Endothelial cell of umbilical vein (primary cell): ENCODE measurements at regions of chr6 and their contacts with region 1.

Region 1: DNA sequence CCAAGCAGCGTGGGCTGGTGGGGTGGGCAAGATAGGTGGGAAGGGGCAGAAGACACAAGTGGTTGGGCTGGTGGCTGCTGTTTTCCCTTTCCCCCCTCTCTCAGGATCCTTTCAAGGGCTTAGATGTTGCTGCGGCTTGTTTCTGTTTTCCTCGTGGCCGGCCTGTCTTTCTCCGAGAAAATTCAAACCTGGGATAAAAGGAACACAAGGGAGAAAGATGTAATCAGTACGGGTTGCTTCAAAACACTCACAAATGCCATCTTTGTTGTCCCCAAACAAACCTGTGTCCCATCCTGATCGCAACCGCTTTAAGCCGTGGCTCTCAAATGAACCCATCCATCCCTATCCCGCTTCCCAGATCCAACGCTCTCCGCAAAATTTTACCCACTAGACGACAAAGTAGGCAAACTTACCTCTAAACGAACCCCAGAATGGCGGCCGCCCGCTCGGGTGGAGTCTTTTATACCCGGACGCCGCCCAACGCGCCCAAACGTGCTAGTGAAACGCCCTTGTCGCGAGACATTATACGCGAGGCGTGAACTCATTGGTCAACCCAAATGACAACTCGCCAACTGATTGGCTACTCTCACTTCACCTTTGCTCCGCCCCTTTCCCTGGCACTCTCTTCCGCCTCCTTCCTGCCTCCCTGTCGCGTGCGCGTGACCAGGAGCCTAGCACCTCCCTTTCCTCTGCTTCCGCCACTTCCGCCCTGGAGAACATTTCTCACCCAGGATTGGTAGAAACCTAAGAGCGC is at the start of gene PPP1R10:
- DNase-seq: peak; percentile 100
- H3K4me3 ChIP-seq: peak within 1 kb of the TSS; percentile 51 to 84 (median 73)
- H3K27ac ChIP-seq: peak within 1 kb of the TSS; percentile 96
- H3K4me1 ChIP-seq: peaks cover 21% of the 10 kb centered on the region
- H3K27me3 ChIP-seq: no peaks in the 10 kb centered on the region
- CTCF ChIP-seq: no peak
- POLR2A ChIP-seq: peak; percentile 100
- total RNA-seq, gene PPP1R10: 75.1 and 88.3 TPM in 2 replicates

Region 2: GRCh38 chr6:30515932-30516753 is 100.8 kb before region 1 on chr6:
- CTCF ChIA-PET with region 1: no interaction called
- POLR2A ChIA-PET with region 1: no interaction called
- dilution Hi-C with region 1: no loop called
- intact Hi-C with region 1: loop called (anchors 1 kb)
- DNase-seq: peak; percentile 99
- H3K4me3 ChIP-seq: peak overlapping the region in 2 of 3 experiments; percentile 18 to 20
- H3K27ac ChIP-seq: peak overlapping the region; percentile 98
- H3K4me1 ChIP-seq: peaks cover 6% of the 10 kb centered on the region
- H3K27me3 ChIP-seq: no peaks in the 10 kb centered on the region
- CTCF ChIP-seq: no peak
- POLR2A ChIP-seq: peak; percentile 64

Region 3: GRCh38 chr6:30571075-30571768 is 45.8 kb before region 1 on chr6 and contains the start of gene ABCF1:
- CTCF ChIA-PET with region 1: no interaction called
- POLR2A ChIA-PET with region 1: interaction called, 6 read pairs
- dilution Hi-C with region 1: no loop called
- intact Hi-C with region 1: loop called (anchors 1 kb)
- DNase-seq: peak; percentile 99
- H3K4me3 ChIP-seq: peak within 1 kb of the TSS; percentile 57 to 86 (median 76)
- H3K27ac ChIP-seq: peak within 1 kb of the TSS; percentile 86
- H3K4me1 ChIP-seq: peaks cover 18% of the 10 kb centered on the region
- H3K27me3 ChIP-seq: no peaks in the 10 kb centered on the region
- CTCF ChIP-seq: no peak
- POLR2A ChIP-seq: no peak
- total RNA-seq, gene ABCF1: 55.8 and 60.3 TPM in 2 replicates

Region 4: GRCh38 chr6:30646458-30647241 is 29.7 kb after region 1 on chr6 and contains the start of gene C6orf136:
- CTCF ChIA-PET with region 1: no interaction called
- POLR2A ChIA-PET with region 1: no interaction called
- dilution Hi-C with region 1: no loop called
- intact Hi-C with region 1: loop called (anchors 1 kb)
- DNase-seq: peak; percentile 93
- H3K4me3 ChIP-seq: peak within 1 kb of the TSS; percentile 70 to 99 (median 76)
- H3K27ac ChIP-seq: peak within 1 kb of the TSS; percentile 26
- H3K4me1 ChIP-seq: peaks cover 8% of the 10 kb centered on the region
- H3K27me3 ChIP-seq: no peaks in the 10 kb centered on the region
- CTCF ChIP-seq: no peak
- POLR2A ChIP-seq: no peak
- total RNA-seq, gene C6orf136: 18.5 and 21.0 TPM in 2 replicates

Region 5: DNA sequence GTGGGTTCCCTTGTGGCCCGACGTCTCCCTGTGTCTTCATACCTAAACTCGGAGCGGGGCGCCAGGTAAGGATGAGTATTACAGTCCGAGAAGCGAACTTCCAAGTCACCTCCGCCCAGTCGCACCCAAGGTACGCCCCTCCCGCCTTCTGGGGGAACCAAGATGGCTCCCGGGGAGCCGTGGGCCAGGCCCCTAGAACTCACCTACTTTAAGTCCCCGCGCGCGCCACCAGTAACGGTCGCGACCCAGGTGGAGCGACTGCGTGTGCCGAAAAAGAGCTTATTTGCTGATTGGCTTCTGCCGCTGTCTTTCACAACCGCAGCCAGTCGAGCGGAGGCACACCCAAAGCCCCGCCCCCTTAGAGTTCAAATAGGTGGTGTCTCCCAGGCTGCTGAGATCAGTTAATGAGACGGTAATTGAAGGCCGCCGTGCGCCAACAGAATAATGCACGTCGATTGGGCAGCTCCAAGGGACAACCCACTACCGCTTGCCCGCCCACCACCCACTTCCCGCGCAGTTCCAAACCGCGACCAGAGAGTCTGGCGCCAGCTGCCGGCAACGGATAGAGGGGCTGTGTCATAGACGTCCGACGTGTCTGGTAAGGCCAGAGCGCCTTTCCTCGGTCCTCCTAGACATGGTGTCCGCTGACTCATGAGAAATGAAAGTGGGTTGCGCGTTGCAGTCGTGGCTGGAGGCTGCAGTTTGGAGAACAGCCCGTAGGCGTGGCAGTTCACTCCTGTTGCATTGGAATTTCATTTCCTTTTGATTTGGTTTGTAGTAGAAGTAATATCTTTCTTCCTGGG is 100.3 kb after region 1 on chr6 and contains the start of gene MDC1:
- CTCF ChIA-PET with region 1: no interaction called
- POLR2A ChIA-PET with region 1: interaction called, 9 read pairs
- dilution Hi-C with region 1: no loop called
- intact Hi-C with region 1: loop called (anchors 1 kb)
- DNase-seq: peak; percentile 100
- H3K4me3 ChIP-seq: peak within 1 kb of the TSS; percentile 7 to 80 (median 72)
- H3K27ac ChIP-seq: peak within 1 kb of the TSS; percentile 82
- H3K4me1 ChIP-seq: peaks cover 23% of the 10 kb centered on the region
- H3K27me3 ChIP-seq: no peaks in the 10 kb centered on the region
- CTCF ChIP-seq: peak in 1 of 2 donors; percentile 34
- POLR2A ChIP-seq: peak; percentile 82
- total RNA-seq, gene MDC1: 42.3 and 43.6 TPM in 2 replicates